CD4-positive, alpha-beta memory T cell (primary cell): ENCODE measurements at regions of chr12 and their contacts with region 1.

Region 1: GRCh38 chr12:104381731-104382480 is 74.8 kb upstream of the CHST11 start:
- DNase-seq: peak; percentile 74 to 81 (median 78)
- H3K4me3 ChIP-seq: no peak overlapping the region
- H3K4me3 Mint-ChIP-seq: peak overlapping the region in 1 of 8 donors; percentile 14
- H3K27ac ChIP-seq: no peak overlapping the region
- H3K27ac Mint-ChIP-seq: peak overlapping the region in 2 of 7 donors; percentile 3 to 66
- H3K4me1 ChIP-seq: peaks cover 7% of the 10 kb centered on the region
- H3K4me1 Mint-ChIP-seq: peaks cover 0 to 11% (median 5%) of the 10 kb centered on the region in 4 donors
- H3K27me3 ChIP-seq: no peaks in the 10 kb centered on the region
- H3K27me3 Mint-ChIP-seq: peaks cover 0 to 4% of the 10 kb centered on the region in 2 donors

Region 2: DNA sequence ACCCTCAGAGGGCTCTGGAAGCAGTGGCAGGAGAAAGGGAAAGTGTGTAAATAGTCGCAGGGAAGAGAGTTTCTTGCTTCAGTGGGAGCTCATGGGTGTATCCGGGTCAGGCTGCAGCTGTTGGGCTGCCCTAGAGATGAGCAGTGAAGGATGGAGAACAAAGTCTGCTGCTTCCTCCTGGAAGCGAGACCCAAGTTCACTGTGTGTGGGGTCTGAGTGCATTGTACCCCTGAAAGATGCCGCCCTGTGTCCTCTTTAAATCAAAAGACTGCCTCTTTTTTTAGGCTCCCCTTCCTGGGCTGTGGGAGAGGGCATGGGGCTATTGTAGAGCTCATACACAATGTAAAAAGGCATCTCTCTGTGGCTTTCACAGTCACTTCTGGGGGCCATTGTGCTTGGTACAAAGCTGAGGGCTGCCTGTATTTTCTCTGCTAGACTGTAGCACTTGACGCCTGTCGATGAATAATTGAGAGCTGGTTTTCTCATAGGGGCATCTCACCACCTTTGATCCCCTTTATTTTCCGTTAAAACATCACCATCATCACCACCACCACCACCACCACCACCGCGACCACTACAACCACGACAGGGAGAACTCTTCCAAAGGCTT is 91.6 kb after region 1 on chr12:
- CTCF ChIA-PET with region 1: interaction called, 10 read pairs
- POLR2A ChIA-PET with region 1: no interaction called
- intact Hi-C with region 1: no loop called
- DNase-seq: no peak
- H3K4me3 ChIP-seq: no peak overlapping the region
- H3K4me3 Mint-ChIP-seq: peak overlapping the region; percentile 7 to 88 (median 74)
- H3K27ac ChIP-seq: no peak overlapping the region
- H3K27ac Mint-ChIP-seq: peak overlapping the region; percentile 72 to 91 (median 83)
- H3K4me1 ChIP-seq: peaks cover 88% of the 10 kb centered on the region
- H3K4me1 Mint-ChIP-seq: peaks cover 75 to 91% (median 83%) of the 10 kb centered on the region in 4 donors
- H3K27me3 ChIP-seq: no peaks in the 10 kb centered on the region
- H3K27me3 Mint-ChIP-seq: no peaks in the 10 kb centered on the region

Region 3: DNA sequence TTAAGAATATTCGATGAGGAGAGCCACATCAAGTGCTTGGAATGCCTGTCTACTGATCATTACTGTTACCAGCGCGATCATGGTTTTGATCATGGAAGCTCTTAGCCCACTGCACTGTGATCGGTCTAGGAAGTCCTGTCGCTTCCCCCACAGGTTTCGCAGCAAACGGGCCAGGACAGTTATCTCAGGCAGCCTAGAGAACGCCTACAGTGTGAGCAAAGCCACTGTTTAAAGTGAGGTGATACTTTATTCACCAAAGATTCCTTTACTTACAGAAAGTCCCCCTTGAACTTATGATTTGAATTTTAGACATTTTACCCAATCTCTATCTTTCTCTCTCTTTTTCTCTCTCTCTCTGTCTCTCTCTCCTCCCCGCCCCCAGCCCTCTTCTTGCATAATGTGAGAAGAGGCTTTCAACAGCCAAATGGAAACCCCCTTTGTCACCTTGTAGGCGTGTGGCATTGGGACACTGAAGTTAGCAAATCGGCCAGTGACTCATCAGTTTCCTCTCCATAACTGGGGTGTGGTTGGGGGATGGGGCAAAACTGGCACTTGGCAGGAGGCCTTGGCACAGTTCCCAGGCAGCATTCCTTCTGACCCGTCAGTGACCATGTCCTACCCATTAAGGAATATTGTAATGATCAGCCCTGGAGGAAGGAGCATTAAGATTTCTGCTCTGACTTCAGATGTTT is 289.6 kb after region 1 on chr12:
- CTCF ChIA-PET with region 1: interaction called, 11 read pairs
- POLR2A ChIA-PET with region 1: no interaction called
- intact Hi-C with region 1: no loop called
- DNase-seq: peak; percentile 46 to 97 (median 52)
- H3K4me3 ChIP-seq: peak overlapping the region in 1 of 2 donors; percentile 2
- H3K4me3 Mint-ChIP-seq: peak overlapping the region in 7 of 8 donors; percentile 14 to 91 (median 65)
- H3K27ac ChIP-seq: peak overlapping the region; percentile 34
- H3K27ac Mint-ChIP-seq: peak overlapping the region; percentile 81 to 97 (median 92)
- H3K4me1 ChIP-seq: peaks cover 50% of the 10 kb centered on the region
- H3K4me1 Mint-ChIP-seq: peaks cover 52 to 76% (median 61%) of the 10 kb centered on the region in 4 donors
- H3K27me3 ChIP-seq: no peaks in the 10 kb centered on the region
- H3K27me3 Mint-ChIP-seq: peaks cover 0 to 2% of the 10 kb centered on the region in 2 donors

Region 4: DNA sequence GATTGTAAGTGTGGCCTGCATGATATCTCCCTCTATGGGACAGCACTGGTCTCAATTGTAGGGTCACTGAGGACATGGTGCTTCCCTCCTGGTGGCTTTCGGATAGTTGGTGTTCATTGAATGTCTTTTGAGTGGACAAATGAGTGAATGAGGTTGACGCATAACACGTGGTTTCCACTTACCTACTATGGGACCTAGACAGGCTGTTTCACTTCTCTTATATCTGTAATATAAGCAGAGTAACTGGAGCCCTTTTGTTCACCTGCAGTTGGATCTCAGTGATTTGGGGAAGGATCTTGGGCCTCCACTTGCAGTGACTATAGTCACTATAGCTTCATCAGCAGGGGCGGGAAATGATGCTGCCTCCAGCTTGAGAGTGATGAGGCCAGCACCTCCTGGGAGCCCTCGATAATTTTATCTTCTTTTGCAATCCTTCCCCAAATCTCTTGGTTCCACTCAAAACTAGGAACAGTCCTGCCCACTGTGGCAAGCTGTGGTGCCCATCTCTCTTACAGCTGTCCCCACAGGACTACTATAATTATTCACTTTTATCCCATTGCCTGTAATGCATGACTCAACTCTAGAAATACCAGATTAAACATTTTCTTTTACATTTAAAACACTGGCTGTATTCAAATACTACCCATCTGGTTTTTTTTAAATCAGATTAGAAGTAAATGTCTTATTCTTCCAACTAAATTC is 317.7 kb after region 1 on chr12:
- CTCF ChIA-PET with region 1: interaction called, 15 read pairs
- POLR2A ChIA-PET with region 1: no interaction called
- intact Hi-C with region 1: no loop called
- DNase-seq: no peak
- H3K4me3 ChIP-seq: no peak overlapping the region
- H3K4me3 Mint-ChIP-seq: no peak overlapping the region
- H3K27ac ChIP-seq: no peak overlapping the region
- H3K27ac Mint-ChIP-seq: peak overlapping the region in 6 of 7 donors; percentile 8 to 81 (median 60)
- H3K4me1 ChIP-seq: peaks cover 27% of the 10 kb centered on the region
- H3K4me1 Mint-ChIP-seq: peaks cover 38 to 70% (median 54%) of the 10 kb centered on the region in 4 donors
- H3K27me3 ChIP-seq: no peaks in the 10 kb centered on the region
- H3K27me3 Mint-ChIP-seq: no peaks in the 10 kb centered on the region

Region 5: GRCh38 chr12:104790296-104791125 is 408.6 kb after region 1 on chr12:
- CTCF ChIA-PET with region 1: interaction called, 13 read pairs
- POLR2A ChIA-PET with region 1: no interaction called
- intact Hi-C with region 1: no loop called
- DNase-seq: peak in 4 of 5 donors; percentile 16 to 30 (median 27)
- H3K4me3 ChIP-seq: no peak overlapping the region
- H3K4me3 Mint-ChIP-seq: peak overlapping the region in 4 of 8 donors; percentile 40 to 58 (median 50)
- H3K27ac ChIP-seq: no peak overlapping the region
- H3K27ac Mint-ChIP-seq: peak overlapping the region in 2 of 7 donors; percentile 58 to 63
- H3K4me1 ChIP-seq: peaks cover 5% of the 10 kb centered on the region
- H3K4me1 Mint-ChIP-seq: peaks cover 1 to 6% (median 4%) of the 10 kb centered on the region in 4 donors
- H3K27me3 ChIP-seq: no peaks in the 10 kb centered on the region
- H3K27me3 Mint-ChIP-seq: no peaks in the 10 kb centered on the region

Region 6: DNA sequence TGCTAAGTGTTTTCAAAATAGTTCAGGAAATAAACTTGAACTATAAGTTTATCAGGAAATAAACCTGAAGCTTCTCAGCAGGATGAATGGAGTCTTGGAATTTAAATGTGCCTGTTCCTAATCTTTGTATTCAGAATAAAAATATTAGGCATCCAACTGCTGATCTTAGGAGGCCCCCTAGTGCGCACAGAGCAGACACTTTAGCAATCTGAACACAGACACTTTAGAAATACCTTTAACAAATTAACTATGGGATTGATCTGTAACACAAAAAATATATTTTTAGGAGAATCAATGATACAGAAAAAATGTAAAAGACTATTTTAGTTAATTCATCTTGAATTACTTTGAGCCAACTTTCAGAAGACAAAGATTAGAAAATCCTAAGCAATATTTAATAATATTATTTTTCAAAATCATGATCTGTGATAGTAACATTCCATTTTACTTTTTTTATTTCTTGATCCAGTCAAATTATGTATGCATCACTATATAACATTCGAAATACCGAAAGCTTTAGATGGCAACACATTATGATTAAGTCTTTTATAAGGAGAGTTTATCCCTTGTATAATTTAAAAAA is 495.3 kb after region 1 on chr12:
- CTCF ChIA-PET with region 1: interaction called, 37 read pairs
- POLR2A ChIA-PET with region 1: no interaction called
- intact Hi-C with region 1: loop called (anchors 1 kb)
- DNase-seq: peak in 4 of 5 donors; percentile 27 to 31 (median 30)
- H3K4me3 ChIP-seq: no peak overlapping the region
- H3K4me3 Mint-ChIP-seq: no peak overlapping the region
- H3K27ac ChIP-seq: no peak overlapping the region
- H3K27ac Mint-ChIP-seq: no peak overlapping the region
- H3K4me1 ChIP-seq: no peaks in the 10 kb centered on the region
- H3K4me1 Mint-ChIP-seq: peaks cover 0 to 2% (median 0%) of the 10 kb centered on the region in 4 donors
- H3K27me3 ChIP-seq: no peaks in the 10 kb centered on the region
- H3K27me3 Mint-ChIP-seq: no peaks in the 10 kb centered on the region

Region 7: GRCh38 chr12:105053116-105053572 is 671.2 kb after region 1 on chr12:
- CTCF ChIA-PET with region 1: interaction called, 104 read pairs
- POLR2A ChIA-PET with region 1: no interaction called
- intact Hi-C with region 1: loop called (anchors 1 kb)
- DNase-seq: peak; percentile 71 to 77 (median 75)
- H3K4me3 ChIP-seq: no peak overlapping the region
- H3K4me3 Mint-ChIP-seq: no peak overlapping the region
- H3K27ac ChIP-seq: no peak overlapping the region
- H3K27ac Mint-ChIP-seq: no peak overlapping the region
- H3K4me1 ChIP-seq: no peaks in the 10 kb centered on the region
- H3K4me1 Mint-ChIP-seq: peaks cover 0 to 3% (median under 1%) of the 10 kb centered on the region in 4 donors
- H3K27me3 ChIP-seq: no peaks in the 10 kb centered on the region
- H3K27me3 Mint-ChIP-seq: peaks cover 2 to 3% of the 10 kb centered on the region in 2 donors